ENCODE measurements at regions of chr17 and their contacts with region 1.

Region 1: DNA sequence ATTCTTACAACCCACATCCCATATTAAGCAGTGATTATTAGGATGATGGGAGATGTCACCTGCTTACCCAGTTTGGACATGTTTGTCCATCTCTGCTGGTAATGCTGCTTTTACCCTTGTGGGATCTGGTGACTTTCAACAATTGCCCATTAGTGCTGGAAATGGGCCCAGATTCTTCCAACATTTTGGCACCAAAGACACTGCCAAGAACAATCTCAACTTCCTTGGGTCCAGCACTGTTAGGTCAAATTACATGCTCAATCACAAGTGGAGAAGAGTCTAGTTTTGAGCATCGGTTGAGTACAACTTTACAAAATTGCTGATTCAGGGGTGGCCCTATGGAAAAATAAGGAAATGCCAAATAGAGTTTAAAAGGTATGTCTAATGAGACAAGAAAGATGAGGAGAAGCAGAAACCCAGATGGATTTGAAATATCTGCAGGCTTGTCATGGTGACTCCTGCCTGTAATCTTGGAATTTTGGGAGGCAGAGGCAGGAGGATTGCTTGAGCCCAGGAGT is 13.0 kb upstream of the ZFP3 start:
- DNase-seq: no peak
- ATAC-seq: no peak
- H3K4me3 ChIP-seq: no peak overlapping the region
- H3K4me3 Mint-ChIP-seq: no peak overlapping the region
- H3K27ac ChIP-seq: no peak overlapping the region
- H3K27ac Mint-ChIP-seq: no peak overlapping the region
- H3K4me1 ChIP-seq: peaks cover 0 to 2% of the 10 kb centered on the region in 2 donors
- H3K4me1 Mint-ChIP-seq: peaks cover 0 to 10% (median 7%) of the 10 kb centered on the region in 7 donors
- H3K27me3 ChIP-seq: no peaks in the 10 kb centered on the region
- H3K27me3 Mint-ChIP-seq: no peaks in the 10 kb centered on the region

Region 2: GRCh38 chr17:5049314-5049895 is 15.9 kb before region 1 on chr17:
- CTCF ChIA-PET with region 1: interaction called, 49 read pairs
- POLR2A ChIA-PET with region 1: interaction called, 3 read pairs
- intact Hi-C with region 1: loop called in 1 of 2 experiments (anchors 1 kb)
- DNase-seq: peak in 7 of 9 donors; percentile 67 to 84 (median 83)
- ATAC-seq: peak; percentile 99
- H3K4me3 ChIP-seq: no peak overlapping the region
- H3K4me3 Mint-ChIP-seq: peak overlapping the region; percentile 36 to 72 (median 54)
- H3K27ac ChIP-seq: peak overlapping the region; percentile 58
- H3K27ac Mint-ChIP-seq: peak overlapping the region; percentile 71 to 99 (median 95)
- H3K4me1 ChIP-seq: peaks cover 38 to 55% of the 10 kb centered on the region in 2 donors
- H3K4me1 Mint-ChIP-seq: peaks cover 10 to 58% (median 46%) of the 10 kb centered on the region in 7 donors
- H3K27me3 ChIP-seq: no peaks in the 10 kb centered on the region
- H3K27me3 Mint-ChIP-seq: no peaks in the 10 kb centered on the region

Region 3: GRCh38 chr17:5138616-5139457 is 73.6 kb after region 1 on chr17:
- CTCF ChIA-PET with region 1: no interaction called
- POLR2A ChIA-PET with region 1: no interaction called
- intact Hi-C with region 1: no loop called
- DNase-seq: no peak
- ATAC-seq: no peak
- H3K4me3 ChIP-seq: no peak overlapping the region
- H3K4me3 Mint-ChIP-seq: no peak overlapping the region
- H3K27ac ChIP-seq: no peak overlapping the region
- H3K27ac Mint-ChIP-seq: no peak overlapping the region
- H3K4me1 ChIP-seq: no peaks in the 10 kb centered on the region
- H3K4me1 Mint-ChIP-seq: no peaks in the 10 kb centered on the region
- H3K27me3 ChIP-seq: no peaks in the 10 kb centered on the region
- H3K27me3 Mint-ChIP-seq: peaks cover 0 to 4% (median 0%) of the 10 kb centered on the region in 5 donors

Measured in naive thymus-derived CD4-positive, alpha-beta T cell (primary cell).